Common myeloid progenitor, CD34-positive (primary cell): ENCODE measurements at regions of chr14 and their contacts with region 1.

Region 1: DNA sequence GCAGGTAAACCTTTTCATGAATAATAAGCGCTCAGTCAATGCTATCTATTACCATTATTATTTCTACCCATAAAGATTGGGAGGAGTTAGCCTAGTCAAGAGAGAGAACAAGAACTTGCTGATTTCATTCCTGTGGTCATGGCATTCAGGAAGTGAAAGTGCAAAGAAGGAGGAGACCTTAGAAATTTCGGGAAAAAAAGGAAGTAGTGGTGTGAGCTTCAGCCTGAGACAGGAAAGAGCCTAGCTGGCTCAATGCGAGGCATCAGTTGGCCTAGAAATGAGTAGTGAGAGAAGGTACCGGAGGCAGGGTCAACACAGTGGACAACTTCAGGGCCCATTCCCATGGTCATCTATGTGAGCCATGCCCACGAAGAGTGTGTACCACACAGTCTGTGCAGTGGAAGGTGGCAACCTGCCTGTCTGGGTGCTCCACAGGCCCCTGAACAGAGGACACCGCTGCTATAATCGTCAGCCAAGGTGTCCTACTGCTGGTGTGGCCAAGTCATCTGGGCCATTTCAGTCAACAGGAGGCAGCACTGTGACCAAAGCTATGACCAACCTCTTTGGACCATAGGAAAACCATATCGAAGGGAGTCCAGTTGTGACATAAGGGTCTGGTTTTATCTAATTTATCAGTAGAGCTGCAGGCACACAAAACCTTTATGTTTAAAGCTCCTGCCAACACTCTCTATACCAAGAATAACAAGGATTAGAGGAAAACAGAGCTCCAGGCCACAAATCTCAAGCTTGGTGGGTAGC is 16.2 kb upstream of the STON2 start:
- DNase-seq: peak; percentile 64 to 77 (median 71)
- H3K4me3 ChIP-seq: peak overlapping the region in 4 of 7 experiments; percentile 13 to 58 (median 34)
- H3K27ac ChIP-seq: peak overlapping the region; percentile 46 to 67
- H3K4me1 ChIP-seq: peaks cover 2 to 40% (median 33%) of the 10 kb centered on the region in 4 experiments
- H3K27me3 ChIP-seq: no peaks in the 10 kb centered on the region

Region 2: DNA sequence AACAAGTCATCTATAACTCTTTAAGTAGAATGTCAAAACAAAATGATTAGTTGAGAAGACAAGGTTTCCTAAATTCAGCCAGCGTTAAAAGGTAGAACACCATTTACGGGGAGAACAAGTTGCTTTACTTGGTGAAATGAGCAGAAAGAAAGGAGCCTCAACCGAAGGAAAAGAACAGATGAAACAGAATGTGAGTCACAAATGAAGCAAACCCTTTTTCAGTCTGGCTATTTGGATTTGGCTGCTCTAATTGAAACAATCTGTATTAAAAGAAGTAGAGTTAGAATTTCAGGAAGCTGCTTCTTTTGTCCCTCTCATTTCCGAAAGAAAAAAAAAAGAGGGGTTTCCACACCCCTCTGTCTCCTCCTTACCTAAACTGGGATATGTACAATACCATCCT is 509.4 kb before region 1 on chr14:
- CTCF ChIA-PET with region 1: no interaction called
- POLR2A ChIA-PET with region 1: no interaction called
- DNase-seq: no peak
- H3K4me3 ChIP-seq: no peak overlapping the region
- H3K27ac ChIP-seq: no peak overlapping the region
- H3K4me1 ChIP-seq: no peaks in the 10 kb centered on the region
- H3K27me3 ChIP-seq: no peaks in the 10 kb centered on the region

Region 3: GRCh38 chr14:81193924-81194633 is 222.3 kb before region 1 on chr14:
- CTCF ChIA-PET with region 1: no interaction called
- POLR2A ChIA-PET with region 1: no interaction called
- DNase-seq: no peak
- H3K4me3 ChIP-seq: no peak overlapping the region
- H3K27ac ChIP-seq: no peak overlapping the region
- H3K4me1 ChIP-seq: no peaks in the 10 kb centered on the region
- H3K27me3 ChIP-seq: no peaks in the 10 kb centered on the region

Region 4: GRCh38 chr14:81400852-81401251 is 15.5 kb before region 1 on chr14:
- CTCF ChIA-PET with region 1: interaction called, 14 read pairs
- POLR2A ChIA-PET with region 1: no interaction called
- DNase-seq: peak in 2 of 3 donors; percentile 37 to 57
- H3K4me3 ChIP-seq: no peak overlapping the region
- H3K27ac ChIP-seq: no peak overlapping the region
- H3K4me1 ChIP-seq: peaks cover 6 to 45% (median 35%) of the 10 kb centered on the region in 4 experiments
- H3K27me3 ChIP-seq: no peaks in the 10 kb centered on the region

Region 5: GRCh38 chr14:81427348-81428058 is 11.1 kb after region 1 on chr14:
- CTCF ChIA-PET with region 1: interaction called, 24 read pairs
- POLR2A ChIA-PET with region 1: no interaction called
- DNase-seq: peak; percentile 66 to 93 (median 87)
- H3K4me3 ChIP-seq: peak overlapping the region in 6 of 7 experiments; percentile 12 to 70 (median 56)
- H3K27ac ChIP-seq: peak overlapping the region; percentile 14 to 66
- H3K4me1 ChIP-seq: peaks cover 10 to 77% (median 60%) of the 10 kb centered on the region in 4 experiments
- H3K27me3 ChIP-seq: no peaks in the 10 kb centered on the region